ENCODE measurements at regions of chr1 and their contacts with region 1.

Region 1: GRCh38 chr1:160837558-160838205 is 25.0 kb downstream of the CD244 start:
- DNase-seq: peak; percentile 68 to 95 (median 82)
- ATAC-seq: peak; percentile 96
- H3K4me3 ChIP-seq: peak overlapping the region; percentile 23
- H3K4me3 Mint-ChIP-seq: peak overlapping the region; percentile 79
- H3K27ac ChIP-seq: peak overlapping the region; percentile 76 to 79
- H3K27ac Mint-ChIP-seq: peak overlapping the region; percentile 96
- H3K4me1 ChIP-seq: peaks cover 55% of the 10 kb centered on the region
- H3K4me1 Mint-ChIP-seq: peaks cover 73% of the 10 kb centered on the region
- H3K27me3 ChIP-seq: no peaks in the 10 kb centered on the region
- H3K27me3 Mint-ChIP-seq: no peaks in the 10 kb centered on the region
- CTCF ChIP-seq: peak; percentile 65

Region 2: DNA sequence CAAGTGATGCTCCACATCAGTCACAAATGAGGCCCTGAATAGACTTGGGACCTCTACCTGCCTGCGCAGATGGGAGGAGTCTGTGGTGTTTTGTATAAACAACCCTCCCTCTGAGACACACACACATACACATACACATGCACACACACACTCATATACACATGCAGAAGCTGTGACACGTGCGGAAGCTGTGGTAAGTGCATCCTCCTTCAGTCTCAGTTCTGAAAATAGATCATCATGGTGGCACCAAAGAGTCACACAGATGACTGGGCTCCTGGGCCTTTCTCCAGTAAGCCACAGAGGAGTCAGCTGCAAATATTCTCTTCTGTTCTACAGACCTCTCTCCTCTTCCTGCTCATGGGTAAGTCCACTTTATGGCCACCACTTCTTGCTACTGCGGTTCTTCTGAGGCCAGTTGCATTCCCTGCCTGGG is 41.7 kb before region 1 on chr1 and contains the start of gene LY9:
- CTCF ChIA-PET with region 1: interaction called, 4 read pairs
- POLR2A ChIA-PET with region 1: interaction called, 50 read pairs
- intact Hi-C with region 1: loop called (anchors 2 to 5 kb)
- DNase-seq: peak; percentile 64 to 97 (median 72)
- ATAC-seq: peak; percentile 88
- H3K4me3 ChIP-seq: peak within 1 kb of the TSS; percentile 74
- H3K4me3 Mint-ChIP-seq: peak within 1 kb of the TSS; percentile 97
- H3K27ac ChIP-seq: peak within 1 kb of the TSS; percentile 73 to 88
- H3K27ac Mint-ChIP-seq: peak within 1 kb of the TSS; percentile 92
- H3K4me1 ChIP-seq: peaks cover 37% of the 10 kb centered on the region
- H3K4me1 Mint-ChIP-seq: peaks cover 62% of the 10 kb centered on the region
- H3K27me3 ChIP-seq: no peaks in the 10 kb centered on the region
- H3K27me3 Mint-ChIP-seq: no peaks in the 10 kb centered on the region
- CTCF ChIP-seq: no peak
- total RNA-seq, gene LY9: 124 TPM

Region 3: GRCh38 chr1:160868141-160868540 is 30.5 kb after region 1 on chr1:
- CTCF ChIA-PET with region 1: no interaction called
- POLR2A ChIA-PET with region 1: no interaction called
- intact Hi-C with region 1: loop called in 1 of 2 experiments (anchors 2 kb)
- DNase-seq: peak in 2 of 14 experiments; percentile 28 to 47
- ATAC-seq: no peak
- H3K4me3 ChIP-seq: no peak overlapping the region
- H3K4me3 Mint-ChIP-seq: no peak overlapping the region
- H3K27ac ChIP-seq: no peak overlapping the region
- H3K27ac Mint-ChIP-seq: no peak overlapping the region
- H3K4me1 ChIP-seq: peaks cover 2% of the 10 kb centered on the region
- H3K4me1 Mint-ChIP-seq: peaks cover 13% of the 10 kb centered on the region
- H3K27me3 ChIP-seq: no peaks in the 10 kb centered on the region
- H3K27me3 Mint-ChIP-seq: no peaks in the 10 kb centered on the region
- CTCF ChIP-seq: no peak

Region 4: DNA sequence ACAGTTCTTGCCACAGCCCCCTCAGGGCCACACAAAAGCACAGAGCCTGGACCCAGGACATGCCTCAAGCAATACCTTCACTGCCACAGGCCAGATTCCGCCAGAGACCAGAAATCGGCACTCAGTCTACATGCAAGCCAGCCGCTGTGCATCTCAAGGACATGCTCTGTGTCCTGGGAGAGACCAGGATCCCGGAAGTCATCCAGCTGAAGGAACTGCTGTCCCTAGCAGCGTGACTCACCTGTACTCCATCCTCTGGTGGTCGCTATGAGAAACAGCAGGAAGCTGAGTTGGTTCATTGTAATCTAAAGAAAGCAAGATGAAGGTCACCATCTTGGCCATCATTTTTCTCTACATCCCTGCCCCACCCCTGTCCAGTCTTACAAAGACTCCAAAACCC is 46.9 kb after region 1 on chr1:
- CTCF ChIA-PET with region 1: interaction called, 9 read pairs
- POLR2A ChIA-PET with region 1: interaction called, 19 read pairs
- intact Hi-C with region 1: loop called (anchors 2 kb)
- DNase-seq: peak in 1 of 14 experiments; percentile 72
- ATAC-seq: peak; percentile 78
- H3K4me3 ChIP-seq: no peak overlapping the region
- H3K4me3 Mint-ChIP-seq: no peak overlapping the region
- H3K27ac ChIP-seq: no peak overlapping the region
- H3K27ac Mint-ChIP-seq: no peak overlapping the region
- H3K4me1 ChIP-seq: peaks cover 9% of the 10 kb centered on the region
- H3K4me1 Mint-ChIP-seq: peaks cover 5% of the 10 kb centered on the region
- H3K27me3 ChIP-seq: peaks cover 0 to 4% of the 10 kb centered on the region in 2 experiments
- H3K27me3 Mint-ChIP-seq: peaks cover 4% of the 10 kb centered on the region
- CTCF ChIP-seq: peak; percentile 71

Region 5: GRCh38 chr1:161098210-161099068 is 260.8 kb after region 1 on chr1 and contains the start of gene KLHDC9:
- CTCF ChIA-PET with region 1: interaction called, 5 read pairs
- POLR2A ChIA-PET with region 1: interaction called, 3 read pairs
- intact Hi-C with region 1: loop called (anchors 5 to 10 kb)
- DNase-seq: peak; percentile 38 to 88 (median 58)
- ATAC-seq: peak; percentile 50
- H3K4me3 ChIP-seq: peak within 1 kb of the TSS; percentile 51
- H3K4me3 Mint-ChIP-seq: peak within 1 kb of the TSS; percentile 87
- H3K27ac ChIP-seq: peak within 1 kb of the TSS in 1 of 2 donors; percentile 52
- H3K27ac Mint-ChIP-seq: peak within 1 kb of the TSS; percentile 90
- H3K4me1 ChIP-seq: peaks cover 22% of the 10 kb centered on the region
- H3K4me1 Mint-ChIP-seq: peaks cover 23% of the 10 kb centered on the region
- H3K27me3 ChIP-seq: no peaks in the 10 kb centered on the region
- H3K27me3 Mint-ChIP-seq: peaks cover 6% of the 10 kb centered on the region
- CTCF ChIP-seq: peak; percentile 29
- total RNA-seq, gene KLHDC9: 0.41 TPM in 1 of 2 experiments, not detected in the other

Measured in CD4-positive, alpha-beta T cell (primary cell).